SK-N-SH (cell line): ENCODE measurements at regions of chr2 and their contacts with region 1.

Region 1: GRCh38 chr2:171723724-171724683 is 36.7 kb downstream of the DYNC1I2 start:
- DNase-seq: peak; percentile 30
- H3K4me3 ChIP-seq: no peak overlapping the region
- H3K27ac ChIP-seq: peak overlapping the region in 1 of 2 experiments; percentile 44; a peak in 2 of 4 replicates
- H3K4me1 ChIP-seq: peaks cover 11 to 42% of the 10 kb centered on the region in 2 experiments; a peak in 3 of 4 replicates
- H3K27me3 ChIP-seq: no peaks in the 10 kb centered on the region
- CTCF ChIP-seq: no peak
- EP300 ChIP-seq: no peak
- RAD21 ChIP-seq: peak; percentile 62

Region 2: GRCh38 chr2:171416009-171416926 is 307.7 kb before region 1 on chr2:
- CTCF ChIA-PET with region 1: no interaction called
- POLR2A ChIA-PET with region 1: no interaction called
- DNase-seq: peak; percentile 74
- H3K4me3 ChIP-seq: peak overlapping the region; percentile 17 to 42; a peak in 3 of 4 replicates
- H3K27ac ChIP-seq: peak overlapping the region; percentile 56 to 82
- H3K4me1 ChIP-seq: peaks cover 0 to 17% of the 10 kb centered on the region in 2 experiments; a peak in 2 of 4 replicates
- H3K27me3 ChIP-seq: no peaks in the 10 kb centered on the region
- CTCF ChIP-seq: peak; percentile 91
- EP300 ChIP-seq: no peak
- RAD21 ChIP-seq: peak; percentile 94

Region 3: DNA sequence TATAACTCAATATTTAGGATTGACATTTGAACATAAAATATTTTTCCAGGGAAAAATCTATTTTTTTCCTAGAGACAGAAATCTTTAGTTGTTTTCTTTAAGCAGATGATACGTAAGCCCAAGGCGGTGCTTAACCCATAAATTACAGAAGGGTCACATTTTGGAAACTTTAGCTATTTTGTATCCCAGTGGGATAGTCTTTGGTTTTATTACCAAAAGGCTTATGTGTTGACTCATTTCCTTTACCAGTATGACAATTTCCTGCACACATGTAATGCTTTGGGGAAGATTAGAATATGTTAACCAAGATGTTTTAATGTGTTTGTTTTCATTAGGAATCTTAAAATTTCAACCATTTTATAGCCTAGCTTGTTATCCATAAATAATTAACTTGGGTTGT is 12.0 kb before region 1 on chr2:
- CTCF ChIA-PET with region 1: interaction called, 14 read pairs
- POLR2A ChIA-PET with region 1: no interaction called
- DNase-seq: no peak
- H3K4me3 ChIP-seq: no peak overlapping the region
- H3K27ac ChIP-seq: peak overlapping the region in 1 of 2 experiments; percentile 90; a peak in 3 of 4 replicates
- H3K4me1 ChIP-seq: peaks cover 0 to 39% of the 10 kb centered on the region in 2 experiments; a peak in 1 of 4 replicates
- H3K27me3 ChIP-seq: no peaks in the 10 kb centered on the region
- CTCF ChIP-seq: no peak
- EP300 ChIP-seq: no peak
- RAD21 ChIP-seq: no peak